Dendritic cell treated with granulocyte-macrophage colony-stimulating factor and Interleukin-4, amounts not matched to agents 40 ng/mL and 50 ng/mL, for 4 days (primary cell): ENCODE measurements at regions of chr13 and their contacts with region 1.

Region 1: DNA sequence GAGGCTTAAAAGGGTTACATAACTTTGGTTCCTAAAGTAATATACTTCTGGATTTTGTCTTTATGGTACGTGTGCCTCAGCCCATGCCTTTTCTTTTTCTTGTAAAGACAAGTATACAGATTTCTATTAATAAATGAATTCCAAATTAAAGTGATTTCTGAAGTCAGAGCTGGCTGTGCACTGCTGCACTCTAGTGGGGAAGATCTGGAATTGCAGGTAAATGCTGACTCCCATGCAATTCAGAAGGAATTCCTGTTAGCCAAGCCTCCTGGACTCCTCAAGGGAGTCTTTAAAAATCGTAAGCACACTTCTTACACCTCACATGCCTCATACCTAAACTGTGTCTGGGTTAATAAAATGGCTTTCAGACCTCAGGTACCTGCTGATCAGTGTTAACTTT is 118.4 kb upstream of the SLC7A1 start:
- H3K4me3 Mint-ChIP-seq: no peak overlapping the region
- H3K27ac Mint-ChIP-seq: no peak overlapping the region
- H3K4me1 Mint-ChIP-seq: no peaks in the 10 kb centered on the region
- H3K27me3 Mint-ChIP-seq: peaks cover 6% of the 10 kb centered on the region

Region 2: DNA sequence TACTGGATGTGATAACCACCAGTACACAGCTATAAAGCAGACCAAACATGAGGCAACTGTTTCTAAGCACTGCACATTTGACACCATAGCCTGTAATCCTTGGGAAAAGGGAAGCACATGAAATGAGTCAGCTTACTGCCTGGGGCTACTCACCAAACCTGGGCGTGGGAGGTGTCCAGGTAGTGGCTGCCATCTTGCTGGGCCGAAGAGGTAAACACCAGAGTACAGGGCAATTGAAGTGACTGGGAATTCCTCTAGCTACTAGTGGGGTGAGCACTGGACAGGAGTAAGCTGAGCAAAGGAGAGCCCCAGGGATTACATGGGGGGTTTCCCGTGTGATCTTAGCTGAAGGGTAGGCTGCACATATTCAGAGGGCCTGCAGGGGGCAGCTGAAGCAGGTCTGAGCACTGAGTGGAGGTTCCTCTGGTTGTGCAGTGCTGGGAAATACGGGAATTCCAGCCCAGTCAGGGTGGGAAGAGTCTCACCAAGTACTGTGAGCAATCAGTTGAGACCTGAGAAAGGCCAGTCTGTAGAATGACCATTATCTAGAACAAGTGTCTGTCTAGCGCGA is 258.8 kb before region 1 on chr13:
- intact Hi-C with region 1: loop called (anchors 5 kb)
- H3K4me3 Mint-ChIP-seq: no peak overlapping the region
- H3K27ac Mint-ChIP-seq: no peak overlapping the region
- H3K4me1 Mint-ChIP-seq: no peaks in the 10 kb centered on the region
- H3K27me3 Mint-ChIP-seq: no peaks in the 10 kb centered on the region